H1 (cell line): ENCODE measurements at regions of chr19 and their contacts with region 1.

Region 1: GRCh38 chr19:17052439-17053210 is 22.6 kb downstream of the HAUS8 start:
- DNase-seq: peak in 1 of 2 experiments; percentile 67
- H3K4me3 ChIP-seq: no peak overlapping the region
- H3K27ac ChIP-seq: no peak overlapping the region
- H3K4me1 ChIP-seq: no peaks in the 10 kb centered on the region
- H3K27me3 ChIP-seq: no peaks in the 10 kb centered on the region
- CTCF ChIP-seq: peak; percentile 48 to 70 (median 69)
- EP300 ChIP-seq: no peak
- POLR2A ChIP-seq: no peak
- RAD21 ChIP-seq: peak; percentile 67 to 76

Region 2: DNA sequence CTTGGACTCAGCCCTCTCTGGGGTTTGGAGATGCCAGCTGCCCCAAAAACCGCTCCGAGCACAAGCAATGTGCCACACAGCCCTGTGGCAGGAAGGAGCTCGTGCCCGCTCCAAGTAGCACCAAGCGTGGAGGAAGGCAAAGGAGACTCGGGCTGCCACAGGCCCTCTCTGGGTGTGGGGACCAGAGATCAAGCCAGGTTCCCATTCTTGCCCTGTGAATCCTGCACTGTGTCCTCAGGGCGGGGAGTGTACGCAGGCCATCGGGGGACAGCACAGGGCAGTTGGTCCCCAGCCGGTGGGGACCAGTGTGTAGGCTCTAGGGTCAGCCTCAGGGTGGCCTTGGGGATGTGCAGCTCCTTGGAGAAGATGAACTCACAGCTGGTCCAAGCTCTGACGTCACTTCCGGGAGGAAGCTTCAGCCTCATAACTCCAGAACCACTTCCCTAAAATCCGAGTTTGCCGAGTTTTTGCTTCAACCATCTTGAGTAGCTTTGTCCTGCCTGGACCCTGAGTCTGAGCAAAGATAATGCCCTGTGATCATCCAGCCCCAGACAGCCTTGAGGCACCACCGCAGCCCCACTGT is 16.7 kb before region 1 on chr19:
- CTCF ChIA-PET with region 1: interaction called, 13 read pairs
- POLR2A ChIA-PET with region 1: interaction called, 3 read pairs
- DNase-seq: no peak
- H3K4me3 ChIP-seq: no peak overlapping the region
- H3K27ac ChIP-seq: no peak overlapping the region
- H3K4me1 ChIP-seq: no peaks in the 10 kb centered on the region
- H3K27me3 ChIP-seq: no peaks in the 10 kb centered on the region
- CTCF ChIP-seq: no peak
- EP300 ChIP-seq: no peak
- POLR2A ChIP-seq: no peak
- RAD21 ChIP-seq: no peak

Region 3: DNA sequence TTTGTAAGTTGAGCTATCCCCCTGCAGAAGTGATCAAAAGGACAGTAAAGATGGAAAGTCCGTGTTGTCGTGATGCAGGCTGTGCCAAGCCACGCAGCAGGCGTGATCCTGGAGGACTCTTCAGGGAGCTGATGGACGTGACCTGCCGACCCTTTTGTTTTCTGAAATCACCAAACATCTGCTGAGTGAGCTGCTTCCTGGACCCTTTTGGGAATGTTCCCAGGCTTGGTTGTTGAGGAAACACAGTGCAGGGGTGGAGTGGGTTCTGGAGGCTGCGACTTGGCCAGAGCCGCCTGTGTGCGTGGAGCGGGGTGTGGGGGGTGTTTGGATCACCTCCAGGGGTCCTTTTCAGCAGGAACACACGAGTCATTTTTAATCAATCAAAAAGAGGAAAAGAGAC is 10.6 kb before region 1 on chr19:
- CTCF ChIA-PET with region 1: interaction called, 17 read pairs
- POLR2A ChIA-PET with region 1: interaction called, 3 read pairs
- DNase-seq: no peak
- H3K4me3 ChIP-seq: no peak overlapping the region
- H3K27ac ChIP-seq: no peak overlapping the region
- H3K4me1 ChIP-seq: no peaks in the 10 kb centered on the region
- H3K27me3 ChIP-seq: no peaks in the 10 kb centered on the region
- CTCF ChIP-seq: no peak
- EP300 ChIP-seq: no peak
- POLR2A ChIP-seq: no peak
- RAD21 ChIP-seq: no peak

Region 4: DNA sequence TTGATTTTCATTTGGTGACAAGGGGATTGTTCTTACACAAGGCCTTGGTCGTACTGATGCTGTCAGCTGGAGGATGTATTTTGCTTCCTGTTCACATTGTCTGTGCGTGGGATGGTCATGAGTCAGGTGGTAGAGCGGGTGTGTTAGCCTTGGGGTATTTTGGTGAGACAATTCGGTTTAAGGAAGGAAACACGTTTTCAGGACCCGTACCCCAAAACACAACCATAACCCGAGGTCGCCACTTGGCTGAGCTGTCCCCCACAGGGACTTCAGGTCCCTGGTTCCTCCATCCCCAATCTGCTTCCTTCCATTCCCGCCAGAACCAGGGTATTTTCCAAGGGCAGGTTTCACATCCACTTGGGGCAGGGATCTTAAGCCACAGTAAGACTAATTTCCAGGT is 38.0 kb after region 1 on chr19:
- CTCF ChIA-PET with region 1: no interaction called
- POLR2A ChIA-PET with region 1: no interaction called
- DNase-seq: no peak
- H3K4me3 ChIP-seq: no peak overlapping the region
- H3K27ac ChIP-seq: no peak overlapping the region; the same call in 1 of the 2 replicates
- H3K4me1 ChIP-seq: peaks cover 0 to 5% (median 0%) of the 10 kb centered on the region in 4 experiments; a peak in 1 of 7 replicates
- H3K27me3 ChIP-seq: no peaks in the 10 kb centered on the region
- CTCF ChIP-seq: no peak
- EP300 ChIP-seq: no peak
- POLR2A ChIP-seq: no peak
- RAD21 ChIP-seq: no peak